ENCODE measurements at regions of chr4 and their contacts with region 1.

Region 1: GRCh38 chr4:110508827-110509710 is 33.1 kb downstream of the ENPEP start:
- DNase-seq: peak; percentile 42
- CTCF ChIP-seq: peak; percentile 35

Region 2: GRCh38 chr4:110344162-110344561 is 164.9 kb before region 1 on chr4:
- in situ Hi-C with region 1: loop called (anchors 10 kb)
- DNase-seq: peak; percentile 22
- CTCF ChIP-seq: no peak